ENCODE measurements at regions of chr3 and their contacts with region 1.

Region 1: DNA sequence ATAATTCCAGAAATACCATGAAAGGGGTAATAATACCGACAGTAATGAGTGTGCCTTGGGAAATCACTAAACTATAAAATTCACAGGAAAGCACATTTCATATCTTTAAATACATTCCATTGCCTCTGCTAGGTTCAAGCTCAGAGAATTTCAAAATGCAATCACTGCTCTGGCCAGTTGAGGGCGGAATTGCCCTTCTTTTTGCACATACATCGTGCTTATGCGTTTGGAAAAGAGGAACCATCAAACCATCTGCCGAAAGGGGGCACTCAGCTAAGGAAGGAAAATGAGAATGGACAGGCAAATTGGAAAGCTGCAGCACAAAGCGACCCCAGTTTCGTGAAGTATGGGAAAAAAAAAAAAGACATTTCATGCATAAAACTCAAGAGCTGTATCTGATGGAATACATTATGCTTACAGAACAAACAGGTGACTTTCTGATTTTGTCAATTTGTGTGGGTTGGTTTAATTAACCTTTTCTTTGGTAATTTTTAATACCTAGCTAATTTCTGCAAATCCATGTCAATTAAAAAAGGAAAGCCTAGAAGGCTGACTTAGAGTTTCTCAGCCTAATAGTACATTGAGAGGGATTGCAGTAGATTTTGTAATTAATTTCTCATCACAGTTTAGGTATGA is 61.4 kb downstream of the TUSC7 start:
- DNase-seq: peak in 1 of 9 donors; percentile 32
- ATAC-seq: peak; percentile 48
- H3K4me3 ChIP-seq: no peak overlapping the region
- H3K4me3 Mint-ChIP-seq: no peak overlapping the region
- H3K27ac ChIP-seq: no peak overlapping the region
- H3K27ac Mint-ChIP-seq: no peak overlapping the region
- H3K4me1 ChIP-seq: no peaks in the 10 kb centered on the region
- H3K4me1 Mint-ChIP-seq: no peaks in the 10 kb centered on the region
- H3K27me3 ChIP-seq: no peaks in the 10 kb centered on the region
- H3K27me3 Mint-ChIP-seq: peaks cover 0 to 4% (median 0%) of the 10 kb centered on the region in 5 donors

Region 2: GRCh38 chr3:116707531-116707930 is 63.4 kb before region 1 on chr3:
- CTCF ChIA-PET with region 1: no interaction called
- POLR2A ChIA-PET with region 1: no interaction called
- intact Hi-C with region 1: no loop called
- DNase-seq: no peak
- ATAC-seq: no peak
- H3K4me3 ChIP-seq: no peak overlapping the region
- H3K4me3 Mint-ChIP-seq: no peak overlapping the region
- H3K27ac ChIP-seq: no peak overlapping the region
- H3K27ac Mint-ChIP-seq: no peak overlapping the region
- H3K4me1 ChIP-seq: no peaks in the 10 kb centered on the region
- H3K4me1 Mint-ChIP-seq: no peaks in the 10 kb centered on the region
- H3K27me3 ChIP-seq: no peaks in the 10 kb centered on the region
- H3K27me3 Mint-ChIP-seq: no peaks in the 10 kb centered on the region

Region 3: GRCh38 chr3:116757315-116757714 is 13.6 kb before region 1 on chr3:
- CTCF ChIA-PET with region 1: no interaction called
- POLR2A ChIA-PET with region 1: no interaction called
- intact Hi-C with region 1: no loop called
- DNase-seq: no peak
- ATAC-seq: no peak
- H3K4me3 ChIP-seq: no peak overlapping the region
- H3K4me3 Mint-ChIP-seq: no peak overlapping the region
- H3K27ac ChIP-seq: no peak overlapping the region
- H3K27ac Mint-ChIP-seq: no peak overlapping the region
- H3K4me1 ChIP-seq: no peaks in the 10 kb centered on the region
- H3K4me1 Mint-ChIP-seq: no peaks in the 10 kb centered on the region
- H3K27me3 ChIP-seq: no peaks in the 10 kb centered on the region
- H3K27me3 Mint-ChIP-seq: no peaks in the 10 kb centered on the region

Region 4: GRCh38 chr3:116877968-116878367 is 107.0 kb after region 1 on chr3:
- CTCF ChIA-PET with region 1: no interaction called
- POLR2A ChIA-PET with region 1: no interaction called
- intact Hi-C with region 1: no loop called
- DNase-seq: no peak
- ATAC-seq: no peak
- H3K4me3 ChIP-seq: no peak overlapping the region
- H3K4me3 Mint-ChIP-seq: no peak overlapping the region
- H3K27ac ChIP-seq: no peak overlapping the region
- H3K27ac Mint-ChIP-seq: no peak overlapping the region
- H3K4me1 ChIP-seq: no peaks in the 10 kb centered on the region
- H3K4me1 Mint-ChIP-seq: no peaks in the 10 kb centered on the region
- H3K27me3 ChIP-seq: no peaks in the 10 kb centered on the region
- H3K27me3 Mint-ChIP-seq: no peaks in the 10 kb centered on the region

Region 5: GRCh38 chr3:117526470-117527079 is 755.6 kb after region 1 on chr3:
- CTCF ChIA-PET with region 1: no interaction called
- POLR2A ChIA-PET with region 1: no interaction called
- intact Hi-C with region 1: loop called in 1 of 2 experiments (anchors 2 kb)
- DNase-seq: no peak
- ATAC-seq: no peak
- H3K4me3 ChIP-seq: no peak overlapping the region
- H3K4me3 Mint-ChIP-seq: no peak overlapping the region
- H3K27ac ChIP-seq: no peak overlapping the region
- H3K27ac Mint-ChIP-seq: no peak overlapping the region
- H3K4me1 ChIP-seq: no peaks in the 10 kb centered on the region
- H3K4me1 Mint-ChIP-seq: no peaks in the 10 kb centered on the region
- H3K27me3 ChIP-seq: no peaks in the 10 kb centered on the region
- H3K27me3 Mint-ChIP-seq: no peaks in the 10 kb centered on the region

Region 6: DNA sequence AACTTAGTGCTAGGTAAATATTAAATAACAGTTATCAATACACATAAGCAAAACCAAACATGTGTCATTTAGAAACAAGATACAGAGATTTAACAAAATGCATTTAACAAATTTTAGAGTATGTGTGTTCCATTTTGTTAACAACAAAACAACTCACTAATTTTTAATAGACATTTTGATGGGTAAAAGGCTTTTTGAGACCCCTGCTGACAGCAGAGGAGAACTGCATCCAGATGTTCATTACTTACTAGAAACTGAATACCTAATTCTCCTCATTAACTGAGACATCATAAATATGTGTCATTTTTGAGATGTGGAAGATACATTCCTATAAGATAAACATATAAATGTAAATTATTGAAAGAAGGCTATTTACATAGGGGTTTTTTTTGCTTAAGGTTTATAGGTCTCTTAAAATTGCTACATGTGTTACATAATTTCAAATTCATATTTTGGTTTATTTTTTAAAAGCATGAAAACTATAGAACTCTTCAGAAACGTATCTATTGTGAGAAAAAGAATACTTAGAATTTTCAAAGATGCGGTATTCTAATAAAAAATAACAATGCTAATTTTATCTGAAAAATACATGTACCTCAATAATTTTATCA is 948.5 kb after region 1 on chr3:
- CTCF ChIA-PET with region 1: no interaction called
- POLR2A ChIA-PET with region 1: no interaction called
- intact Hi-C with region 1: loop called in 1 of 2 experiments (anchors 1 kb)
- DNase-seq: no peak
- ATAC-seq: no peak
- H3K4me3 ChIP-seq: no peak overlapping the region
- H3K4me3 Mint-ChIP-seq: no peak overlapping the region
- H3K27ac ChIP-seq: no peak overlapping the region
- H3K27ac Mint-ChIP-seq: no peak overlapping the region
- H3K4me1 ChIP-seq: no peaks in the 10 kb centered on the region
- H3K4me1 Mint-ChIP-seq: no peaks in the 10 kb centered on the region
- H3K27me3 ChIP-seq: no peaks in the 10 kb centered on the region
- H3K27me3 Mint-ChIP-seq: no peaks in the 10 kb centered on the region

Measured in naive thymus-derived CD4-positive, alpha-beta T cell (primary cell).